ENCODE measurements at regions of chr4 and their contacts with region 1.

Region 1: DNA sequence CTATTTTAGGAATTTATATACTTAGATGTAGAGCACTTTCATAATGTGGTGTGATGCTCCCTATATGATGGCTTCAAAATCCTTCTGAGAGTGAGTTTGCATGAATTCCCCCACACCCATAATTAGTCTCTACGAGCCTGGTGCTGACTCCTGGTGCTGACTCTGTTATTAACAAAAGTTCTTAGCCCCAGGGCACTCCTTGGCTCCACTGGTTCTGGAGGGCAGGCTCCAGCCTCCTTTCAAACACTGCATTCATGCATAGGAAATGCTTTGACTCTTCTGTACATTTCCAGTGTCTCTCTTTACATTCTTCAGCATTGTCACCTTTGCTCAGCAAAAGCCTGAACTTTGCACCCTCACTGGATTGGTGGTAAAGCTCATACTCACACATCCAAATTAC is 64.0 kb downstream of the LNX1 start:
- DNase-seq: no peak
- ATAC-seq: no peak; the same call in 1 of the 3 replicates
- H3K4me3 ChIP-seq: no peak overlapping the region
- H3K27ac ChIP-seq: no peak overlapping the region
- H3K4me1 ChIP-seq: no peaks in the 10 kb centered on the region
- H3K27me3 ChIP-seq: no peaks in the 10 kb centered on the region
- CTCF ChIP-seq: no peak
- EP300 ChIP-seq: no peak
- POLR2A ChIP-seq: no peak
- RAD21 ChIP-seq: no peak

Region 2: DNA sequence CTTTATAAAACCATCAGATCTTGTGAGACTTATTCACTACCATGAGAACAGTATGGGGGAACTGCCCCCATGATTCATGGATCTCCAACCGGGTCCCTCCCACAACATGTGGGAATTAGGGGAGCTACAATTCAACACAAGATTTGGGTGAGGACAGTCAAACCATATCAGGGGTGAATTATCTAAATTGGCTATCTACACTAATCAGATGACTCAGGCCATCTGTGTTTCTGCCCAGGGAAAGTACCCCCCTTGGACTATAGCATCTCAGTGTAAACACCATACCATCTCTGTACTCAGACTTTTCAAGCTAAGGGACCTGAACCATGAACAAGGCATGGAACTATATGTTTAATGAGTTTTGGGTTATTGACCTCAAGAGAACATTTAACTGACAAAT is 12.8 kb before region 1 on chr4:
- CTCF ChIA-PET with region 1: no interaction called
- POLR2A ChIA-PET with region 1: no interaction called
- RAD21 ChIA-PET with region 1: interaction called, 5 read pairs
- SMC1A ChIA-PET with region 1: interaction called, 13 read pairs
- in situ Hi-C with region 1: no loop called
- intact Hi-C with region 1: no loop called
- DNase-seq: no peak
- ATAC-seq: peak; percentile 67
- H3K4me3 ChIP-seq: no peak overlapping the region
- H3K27ac ChIP-seq: no peak overlapping the region
- H3K4me1 ChIP-seq: no peaks in the 10 kb centered on the region
- H3K27me3 ChIP-seq: no peaks in the 10 kb centered on the region; a peak in 1 of 4 replicates
- CTCF ChIP-seq: no peak
- EP300 ChIP-seq: no peak
- POLR2A ChIP-seq: no peak
- RAD21 ChIP-seq: no peak

Region 3: GRCh38 chr4:53541577-53542206 is 14.4 kb after region 1 on chr4:
- CTCF ChIA-PET with region 1: interaction called, 5 read pairs
- POLR2A ChIA-PET with region 1: interaction called, 6 read pairs
- RAD21 ChIA-PET with region 1: no interaction called
- SMC1A ChIA-PET with region 1: interaction called, 10 read pairs
- in situ Hi-C with region 1: no loop called
- intact Hi-C with region 1: no loop called
- DNase-seq: no peak
- ATAC-seq: peak; percentile 61
- H3K4me3 ChIP-seq: no peak overlapping the region
- H3K27ac ChIP-seq: no peak overlapping the region
- H3K4me1 ChIP-seq: no peaks in the 10 kb centered on the region
- H3K27me3 ChIP-seq: no peaks in the 10 kb centered on the region
- CTCF ChIP-seq: no peak
- EP300 ChIP-seq: no peak
- POLR2A ChIP-seq: no peak
- RAD21 ChIP-seq: no peak

Region 4: GRCh38 chr4:53688186-53688790 is 161.0 kb after region 1 on chr4:
- CTCF ChIA-PET with region 1: no interaction called
- POLR2A ChIA-PET with region 1: no interaction called
- RAD21 ChIA-PET with region 1: no interaction called
- SMC1A ChIA-PET with region 1: no interaction called
- in situ Hi-C with region 1: no loop called
- intact Hi-C with region 1: no loop called
- DNase-seq: peak; percentile 76
- ATAC-seq: peak; percentile 88
- H3K4me3 ChIP-seq: no peak overlapping the region
- H3K27ac ChIP-seq: peak overlapping the region; percentile 1; the same call in 1 of the 2 replicates
- H3K4me1 ChIP-seq: peaks cover 4% of the 10 kb centered on the region; the same call in 1 of the 2 replicates
- H3K27me3 ChIP-seq: no peaks in the 10 kb centered on the region
- CTCF ChIP-seq: no peak
- EP300 ChIP-seq: peak in 1 of 2 experiments; percentile 49; a peak in 1 of 4 replicates
- POLR2A ChIP-seq: no peak
- RAD21 ChIP-seq: no peak

Measured in GM12878 (cell line).